A549 (cell line): ENCODE measurements at regions of chr2 and their contacts with region 1.

Region 1: DNA sequence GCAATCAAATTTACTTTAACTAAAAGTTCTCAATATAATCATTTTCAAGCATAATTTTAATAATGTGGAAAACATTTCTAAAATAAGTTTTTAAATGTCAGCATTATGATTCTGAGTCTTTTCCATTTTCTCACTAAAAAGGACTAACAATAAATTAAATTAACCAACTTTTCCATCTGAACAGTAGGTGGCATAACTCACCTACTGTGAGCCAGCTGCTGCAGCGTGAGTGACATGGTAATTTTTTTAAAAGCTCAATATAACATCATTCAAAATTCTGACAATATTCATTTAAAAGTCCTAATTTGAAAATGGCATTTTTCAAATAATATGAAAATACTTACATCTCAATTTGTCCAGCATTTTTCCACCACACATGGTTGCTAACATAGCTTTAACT is 66.5 kb downstream of the DTNB start:
- DNase-seq: peak; percentile 27 to 60
- ATAC-seq: peak; percentile 68 to 78; a peak in 5 of 6 replicates
- H3K4me3 ChIP-seq: no peak overlapping the region
- H3K27ac ChIP-seq: no peak overlapping the region
- H3K4me1 ChIP-seq: peaks cover 12% of the 10 kb centered on the region
- CTCF ChIP-seq: peak; percentile 98
- EP300 ChIP-seq: no peak
- POLR2A ChIP-seq: no peak
- RAD21 ChIP-seq: peak; percentile 97 to 98

Region 2: DNA sequence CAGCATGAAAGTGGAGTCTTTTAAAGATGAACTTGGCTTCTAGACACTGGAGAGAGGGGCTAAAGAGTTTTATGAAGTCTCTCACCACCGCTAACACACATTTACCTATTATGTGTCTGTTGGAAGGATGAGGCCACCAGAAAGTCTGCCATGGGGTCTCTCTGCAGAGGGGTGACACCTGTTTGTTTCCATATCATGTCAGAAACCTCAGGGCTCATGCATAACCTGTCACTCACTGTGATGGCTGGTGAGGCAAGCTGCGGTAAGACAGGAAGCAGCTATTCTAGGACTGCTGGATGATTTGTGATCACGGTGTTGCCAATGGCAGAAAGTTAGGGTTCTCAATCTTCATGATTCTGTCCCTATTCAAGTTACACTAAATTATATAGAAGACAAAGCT is 204.4 kb before region 1 on chr2:
- CTCF ChIA-PET with region 1: no interaction called
- POLR2A ChIA-PET with region 1: no interaction called
- DNase-seq: no peak
- ATAC-seq: no peak
- H3K4me3 ChIP-seq: no peak overlapping the region
- H3K27ac ChIP-seq: no peak overlapping the region
- H3K4me1 ChIP-seq: no peaks in the 10 kb centered on the region
- CTCF ChIP-seq: no peak
- EP300 ChIP-seq: no peak
- POLR2A ChIP-seq: no peak
- RAD21 ChIP-seq: no peak

Region 3: DNA sequence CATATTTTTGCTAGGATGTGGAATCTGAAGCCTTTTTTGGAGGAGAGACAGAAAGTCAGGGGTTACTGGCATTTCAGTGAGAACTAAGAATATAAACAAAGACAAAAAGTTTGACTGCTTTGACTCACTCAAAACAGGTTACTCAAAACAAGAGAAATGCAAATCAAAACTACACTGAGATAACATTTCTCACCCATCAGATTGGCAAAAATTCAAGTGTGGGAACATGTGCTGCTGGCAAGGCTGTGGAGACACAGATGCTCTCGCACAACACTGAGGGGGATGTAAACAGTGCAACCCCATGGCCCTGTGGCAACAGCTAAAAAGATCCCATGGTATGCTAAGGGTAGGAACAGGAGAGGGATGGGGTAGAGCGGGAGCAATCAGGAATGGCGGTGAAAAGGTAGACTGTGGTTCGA is 20.2 kb before region 1 on chr2:
- CTCF ChIA-PET with region 1: interaction called, 19 read pairs
- POLR2A ChIA-PET with region 1: no interaction called
- DNase-seq: no peak
- ATAC-seq: peak; percentile 44; a peak in 3 of 6 replicates
- H3K4me3 ChIP-seq: no peak overlapping the region
- H3K27ac ChIP-seq: no peak overlapping the region
- H3K4me1 ChIP-seq: peaks cover 11% of the 10 kb centered on the region
- CTCF ChIP-seq: no peak
- EP300 ChIP-seq: no peak
- POLR2A ChIP-seq: no peak
- RAD21 ChIP-seq: no peak

Region 4: DNA sequence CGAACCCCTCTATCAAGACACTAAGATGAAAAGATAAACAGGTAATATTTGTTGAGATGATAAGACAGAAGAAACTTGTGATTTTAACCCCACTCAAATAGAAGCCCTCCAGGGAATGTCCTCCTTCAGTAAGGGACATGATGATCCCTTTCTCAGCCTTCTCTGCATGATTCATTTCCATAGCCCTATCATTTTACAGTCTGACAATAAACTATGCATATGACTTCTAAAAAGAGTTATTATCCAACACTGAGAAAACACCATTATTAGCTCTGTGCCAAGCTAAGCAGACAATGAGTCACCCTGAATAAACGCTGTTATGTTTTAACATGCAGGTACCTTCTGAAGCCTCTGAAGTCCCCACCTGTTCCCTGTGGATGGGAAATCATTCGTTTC is 11.7 kb after region 1 on chr2:
- CTCF ChIA-PET with region 1: interaction called, 36 read pairs
- POLR2A ChIA-PET with region 1: interaction called, 3 read pairs
- DNase-seq: peak; percentile 21 to 73
- ATAC-seq: peak; percentile 87 to 91
- H3K4me3 ChIP-seq: no peak overlapping the region
- H3K27ac ChIP-seq: peak overlapping the region; percentile 72
- H3K4me1 ChIP-seq: peaks cover 39% of the 10 kb centered on the region
- CTCF ChIP-seq: no peak
- EP300 ChIP-seq: no peak
- POLR2A ChIP-seq: no peak
- RAD21 ChIP-seq: no peak

Region 5: GRCh38 chr2:25639171-25639570 is 32.3 kb after region 1 on chr2:
- CTCF ChIA-PET with region 1: interaction called, 19 read pairs
- POLR2A ChIA-PET with region 1: no interaction called
- DNase-seq: no peak
- ATAC-seq: no peak; a peak in 2 of 6 replicates
- H3K4me3 ChIP-seq: no peak overlapping the region
- H3K27ac ChIP-seq: no peak overlapping the region
- H3K4me1 ChIP-seq: no peaks in the 10 kb centered on the region
- CTCF ChIP-seq: no peak
- EP300 ChIP-seq: no peak
- POLR2A ChIP-seq: no peak
- RAD21 ChIP-seq: no peak

Region 6: GRCh38 chr2:25673300-25674076 is 66.6 kb after region 1 on chr2 and contains the start of gene DTNB:
- CTCF ChIA-PET with region 1: interaction called, 414 read pairs
- POLR2A ChIA-PET with region 1: no interaction called
- DNase-seq: peak; percentile 77 to 78
- ATAC-seq: peak; percentile 80 to 82
- H3K4me3 ChIP-seq: peak within 1 kb of the TSS; percentile 79
- H3K27ac ChIP-seq: peak within 1 kb of the TSS; percentile 85 to 93
- H3K4me1 ChIP-seq: peaks cover 13% of the 10 kb centered on the region
- CTCF ChIP-seq: no peak
- EP300 ChIP-seq: no peak
- POLR2A ChIP-seq: peak; percentile 53
- RAD21 ChIP-seq: no peak
- polyA plus RNA-seq, gene DTNB: 32.6 and 41.2 TPM in 2 replicates

Region 7: GRCh38 chr2:25707927-25708590 is 101.2 kb after region 1 on chr2:
- CTCF ChIA-PET with region 1: interaction called, 22 read pairs
- POLR2A ChIA-PET with region 1: no interaction called
- DNase-seq: no peak
- ATAC-seq: peak; percentile 58 to 59; a peak in 5 of 6 replicates
- H3K4me3 ChIP-seq: no peak overlapping the region
- H3K27ac ChIP-seq: no peak overlapping the region
- H3K4me1 ChIP-seq: peaks cover 12% of the 10 kb centered on the region; the same call in 2 of the 3 replicates
- CTCF ChIP-seq: no peak
- EP300 ChIP-seq: no peak
- POLR2A ChIP-seq: no peak
- RAD21 ChIP-seq: no peak